Activated CD4-positive, alpha-beta T cell treated with anti-CD3 and anti-CD28 coated beads, Interleukin-2, amount 10 ng/mL, durations not matched to agents 24 days and 14 days (primary cell): ENCODE measurements at regions of chr16 and their contacts with region 1.

Region 1: GRCh38 chr16:56317998-56318826 is 107.1 kb downstream of the AMFR start:
- DNase-seq: peak; percentile 94
- H3K4me3 Mint-ChIP-seq: peak overlapping the region; percentile 38
- H3K27ac Mint-ChIP-seq: no peak overlapping the region
- H3K4me1 Mint-ChIP-seq: peaks cover 4% of the 10 kb centered on the region
- H3K27me3 Mint-ChIP-seq: peaks cover 5% of the 10 kb centered on the region

Region 2: GRCh38 chr16:55711959-55712876 is 606.0 kb before region 1 on chr16:
- intact Hi-C with region 1: loop called (anchors 5 kb)
- DNase-seq: peak; percentile 86
- H3K4me3 Mint-ChIP-seq: no peak overlapping the region
- H3K27ac Mint-ChIP-seq: no peak overlapping the region
- H3K4me1 Mint-ChIP-seq: no peaks in the 10 kb centered on the region
- H3K27me3 Mint-ChIP-seq: peaks cover 8% of the 10 kb centered on the region

Region 3: DNA sequence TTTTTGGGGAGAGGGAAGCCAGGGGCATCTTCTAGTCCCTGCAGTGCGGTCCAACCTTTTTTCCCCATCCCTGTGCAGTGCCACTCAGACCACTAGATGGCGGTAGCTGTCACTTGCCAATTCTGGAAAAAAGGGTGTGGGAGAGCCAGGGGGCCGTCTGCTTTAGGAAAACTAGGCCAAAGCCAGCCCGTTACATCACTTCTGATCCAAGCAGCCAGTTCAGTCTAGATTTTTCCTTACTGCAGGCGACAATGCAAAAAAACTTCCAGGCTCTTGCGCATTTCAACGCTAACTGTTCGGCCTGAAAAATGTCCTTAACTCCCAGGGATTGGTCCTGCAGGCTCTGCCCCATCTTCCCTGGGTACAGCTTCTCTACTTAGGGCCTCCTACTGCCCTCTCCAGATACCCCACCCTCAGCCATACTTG is 373.8 kb before region 1 on chr16:
- intact Hi-C with region 1: loop called (anchors 1 kb)
- DNase-seq: peak; percentile 84
- H3K4me3 Mint-ChIP-seq: no peak overlapping the region
- H3K27ac Mint-ChIP-seq: no peak overlapping the region
- H3K4me1 Mint-ChIP-seq: no peaks in the 10 kb centered on the region
- H3K27me3 Mint-ChIP-seq: peaks cover 34% of the 10 kb centered on the region

Region 4: GRCh38 chr16:56041686-56042085 is 276.5 kb before region 1 on chr16:
- intact Hi-C with region 1: loop called (anchors 1 kb)
- DNase-seq: peak; percentile 72
- H3K4me3 Mint-ChIP-seq: no peak overlapping the region
- H3K27ac Mint-ChIP-seq: no peak overlapping the region
- H3K4me1 Mint-ChIP-seq: no peaks in the 10 kb centered on the region
- H3K27me3 Mint-ChIP-seq: peaks cover 9% of the 10 kb centered on the region

Region 5: GRCh38 chr16:56145369-56145768 is 172.8 kb before region 1 on chr16:
- intact Hi-C with region 1: no loop called
- DNase-seq: no peak
- H3K4me3 Mint-ChIP-seq: no peak overlapping the region
- H3K27ac Mint-ChIP-seq: no peak overlapping the region
- H3K4me1 Mint-ChIP-seq: no peaks in the 10 kb centered on the region
- H3K27me3 Mint-ChIP-seq: peaks cover 51% of the 10 kb centered on the region

Region 6: GRCh38 chr16:56281256-56281805 is 36.9 kb before region 1 on chr16:
- intact Hi-C with region 1: no loop called
- DNase-seq: no peak
- H3K4me3 Mint-ChIP-seq: no peak overlapping the region
- H3K27ac Mint-ChIP-seq: no peak overlapping the region
- H3K4me1 Mint-ChIP-seq: peaks cover 26% of the 10 kb centered on the region
- H3K27me3 Mint-ChIP-seq: peaks cover 5% of the 10 kb centered on the region